Stomach (tissue), 19 donors: ENCODE measurements at regions of chr15 and their contacts with region 1.

Region 1: DNA sequence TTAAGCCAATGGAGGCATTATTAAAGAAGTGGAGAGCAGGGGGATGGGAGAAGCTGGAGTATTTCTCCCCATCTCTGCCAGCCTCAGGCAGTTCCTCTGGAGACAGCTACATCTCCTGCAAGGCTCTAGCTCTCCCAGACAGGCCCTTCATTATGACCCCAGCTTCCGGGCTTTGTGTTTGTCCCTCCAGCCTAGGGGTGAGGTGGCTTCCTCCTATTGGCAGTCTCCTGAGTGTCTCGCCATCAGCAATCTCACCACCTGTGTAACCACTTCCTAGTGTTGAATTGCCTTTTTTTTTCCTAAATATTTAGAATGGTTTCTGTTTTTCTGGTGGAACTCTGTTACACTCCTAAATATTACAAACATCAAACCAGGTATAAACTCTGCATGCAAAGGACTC is 122.3 kb downstream of the FAM174B start:
- DNase-seq: no peak
- H3K4me3 ChIP-seq: no peak overlapping the region
- H3K27ac ChIP-seq: no peak overlapping the region
- H3K4me1 ChIP-seq: no peaks in the 10 kb centered on the region
- H3K27me3 ChIP-seq: peaks cover 0 to 5% (median 0%) of the 10 kb centered on the region in 3 donors
- CTCF ChIP-seq: no peak
- EP300 ChIP-seq: no peak
- POLR2A ChIP-seq: no peak

Region 2: DNA sequence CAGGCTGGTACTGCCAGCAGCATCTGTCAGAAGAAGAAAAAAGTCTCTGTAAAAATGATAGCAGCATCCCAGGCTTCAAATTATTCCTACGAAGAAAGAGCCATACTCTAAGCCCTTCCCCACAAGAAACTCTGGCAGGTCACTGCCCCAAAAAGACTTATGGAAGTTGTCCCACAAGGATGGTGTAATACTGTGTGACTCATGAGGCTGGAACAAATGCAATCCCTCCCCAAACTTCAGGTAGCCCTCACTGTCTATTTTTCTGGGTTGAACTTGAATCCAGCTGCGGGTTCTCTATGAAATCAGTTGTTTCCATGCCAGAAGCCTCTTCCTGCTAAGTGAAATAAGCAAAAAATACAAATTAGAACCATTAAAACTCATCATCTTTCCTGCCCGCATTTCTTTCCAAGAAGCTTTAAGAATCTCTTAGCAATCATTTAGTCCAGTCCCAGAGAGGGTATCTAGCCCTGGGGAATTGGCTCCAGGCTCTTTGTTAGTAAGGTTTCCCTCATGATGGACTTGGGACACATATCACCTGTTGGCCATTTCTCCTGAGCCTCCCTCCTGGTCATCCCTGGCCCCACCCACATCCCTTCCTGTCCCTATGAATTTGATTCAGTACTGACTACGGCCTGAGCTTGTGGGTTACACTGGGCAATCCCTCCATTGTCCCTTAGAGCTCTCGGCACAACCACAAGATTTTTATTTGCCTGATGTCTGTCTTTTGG is 70.6 kb after region 1 on chr15:
- intact Hi-C with region 1: loop called (anchors 10 kb)
- DNase-seq: no peak
- H3K4me3 ChIP-seq: no peak overlapping the region
- H3K27ac ChIP-seq: peak overlapping the region in 1 of 5 donors; percentile 5
- H3K4me1 ChIP-seq: peaks cover 0 to 10% (median 7%) of the 10 kb centered on the region in 4 donors
- H3K27me3 ChIP-seq: no peaks in the 10 kb centered on the region
- CTCF ChIP-seq: no peak
- EP300 ChIP-seq: no peak
- POLR2A ChIP-seq: no peak